B cell (primary cell): ENCODE measurements at regions of chr2 and their contacts with region 1.

Region 1: GRCh38 chr2:161147856-161148569 is 12.2 kb upstream of the TANK start:
- DNase-seq: no peak
- ATAC-seq: peak; percentile 24
- H3K4me3 ChIP-seq: no peak overlapping the region
- H3K4me3 Mint-ChIP-seq: peak overlapping the region; percentile 30
- H3K27ac ChIP-seq: no peak overlapping the region
- H3K27ac Mint-ChIP-seq: peak overlapping the region; percentile 38
- H3K4me1 ChIP-seq: peaks cover 15 to 24% of the 10 kb centered on the region in 2 donors
- H3K4me1 Mint-ChIP-seq: peaks cover 67% of the 10 kb centered on the region
- H3K27me3 ChIP-seq: no peaks in the 10 kb centered on the region
- H3K27me3 Mint-ChIP-seq: no peaks in the 10 kb centered on the region
- CTCF ChIP-seq: no peak

Region 2: GRCh38 chr2:161165811-161166210 is 17.8 kb after region 1 on chr2:
- CTCF ChIA-PET with region 1: interaction called, 3 read pairs
- POLR2A ChIA-PET with region 1: interaction called, 14 read pairs
- intact Hi-C with region 1: no loop called
- DNase-seq: peak; percentile 72
- ATAC-seq: peak; percentile 63
- H3K4me3 ChIP-seq: peak overlapping the region in 4 of 5 experiments; percentile 12 to 34 (median 24)
- H3K4me3 Mint-ChIP-seq: peak overlapping the region; percentile 74
- H3K27ac ChIP-seq: peak overlapping the region; percentile 65 to 81
- H3K27ac Mint-ChIP-seq: peak overlapping the region; percentile 92
- H3K4me1 ChIP-seq: peaks cover 82 to 85% of the 10 kb centered on the region in 2 donors
- H3K4me1 Mint-ChIP-seq: peaks cover 88% of the 10 kb centered on the region
- H3K27me3 ChIP-seq: no peaks in the 10 kb centered on the region
- H3K27me3 Mint-ChIP-seq: no peaks in the 10 kb centered on the region
- CTCF ChIP-seq: no peak

Region 3: GRCh38 chr2:161190050-161190449 is 42.0 kb after region 1 on chr2:
- CTCF ChIA-PET with region 1: no interaction called
- POLR2A ChIA-PET with region 1: no interaction called
- intact Hi-C with region 1: no loop called
- DNase-seq: no peak
- ATAC-seq: no peak
- H3K4me3 ChIP-seq: no peak overlapping the region
- H3K4me3 Mint-ChIP-seq: no peak overlapping the region
- H3K27ac ChIP-seq: peak overlapping the region in 1 of 2 donors; percentile 23
- H3K27ac Mint-ChIP-seq: no peak overlapping the region
- H3K4me1 ChIP-seq: no peaks in the 10 kb centered on the region
- H3K4me1 Mint-ChIP-seq: peaks cover 69% of the 10 kb centered on the region
- H3K27me3 ChIP-seq: no peaks in the 10 kb centered on the region
- H3K27me3 Mint-ChIP-seq: no peaks in the 10 kb centered on the region
- CTCF ChIP-seq: no peak